ENCODE measurements at regions of chr19 and their contacts with region 1.

Region 1: DNA sequence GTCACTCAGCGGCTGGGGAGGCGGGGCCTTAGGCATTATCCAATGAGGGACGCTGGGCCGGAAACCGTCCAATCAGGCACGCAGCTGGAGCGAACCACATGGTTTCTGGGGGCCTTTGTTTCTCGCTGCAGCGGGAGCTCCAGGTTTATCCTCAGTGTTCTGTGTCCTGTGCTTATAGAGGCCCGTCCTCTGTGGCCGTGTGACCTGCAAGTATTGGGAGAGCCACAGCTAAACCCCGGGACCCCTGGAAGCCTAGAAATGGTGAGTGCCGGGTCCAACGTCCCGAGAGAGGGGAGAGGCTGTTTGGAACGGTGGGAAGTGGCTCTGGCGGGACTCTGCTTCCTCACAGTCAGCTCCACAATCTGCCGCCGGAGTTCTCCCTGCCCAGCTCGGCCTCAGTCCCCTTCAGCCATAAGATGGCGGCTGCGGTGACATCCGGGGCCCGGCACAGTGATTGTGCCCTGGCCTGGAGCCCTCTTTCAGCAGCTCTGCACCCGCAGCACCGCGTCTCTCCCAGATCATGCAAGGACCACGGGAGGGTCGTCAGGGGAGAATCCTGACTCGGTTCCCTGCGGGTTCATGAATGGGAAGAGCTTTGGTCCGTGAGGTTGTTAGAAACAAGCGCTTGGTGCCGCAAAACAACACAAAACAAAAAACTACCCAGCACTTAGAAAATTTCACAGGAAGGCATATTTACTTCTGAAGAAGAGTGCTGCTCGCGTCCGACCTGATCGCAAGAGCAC is at the start of gene ZNF253:
- DNase-seq: peak; percentile 95 to 99 (median 98)

Region 2: DNA sequence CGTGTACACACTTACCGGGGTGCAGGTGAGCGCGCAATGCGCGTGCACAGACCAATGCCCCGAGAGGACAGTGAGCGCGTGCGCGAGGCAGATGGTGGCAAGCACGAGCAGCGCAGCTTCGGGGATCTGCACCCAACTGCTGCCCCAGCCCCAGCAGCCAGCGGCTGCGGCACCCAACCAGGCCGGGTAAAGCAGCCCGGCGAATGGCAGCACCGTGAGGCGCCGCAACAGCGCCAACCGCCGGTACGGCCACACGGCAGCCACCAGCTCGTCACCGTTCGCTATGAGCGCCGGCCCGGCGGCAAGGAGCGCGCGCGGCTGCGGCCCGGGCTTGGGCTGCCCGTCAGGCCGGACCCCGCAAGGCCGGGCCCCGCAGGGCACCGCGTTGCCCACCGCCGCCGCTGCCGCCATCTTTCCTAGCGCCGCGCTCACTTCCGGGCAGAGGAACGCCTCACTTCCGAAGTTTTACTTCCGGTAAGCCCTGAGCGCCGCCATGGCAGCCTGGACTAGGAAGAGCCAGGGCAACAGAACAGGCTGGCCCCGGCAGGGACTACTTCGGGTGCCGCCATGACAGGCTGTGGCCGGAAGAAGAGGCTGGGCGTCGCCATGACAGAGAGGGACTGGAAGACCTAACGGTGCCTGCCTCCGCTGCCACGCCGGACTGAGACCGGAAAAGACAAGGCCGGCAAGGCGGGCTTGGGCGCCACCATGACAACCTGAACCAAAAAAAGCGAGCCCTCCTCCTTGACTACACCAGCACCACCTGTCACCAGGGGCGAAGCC is 202.5 kb before region 1 on chr19 and contains the start of gene ATP13A1:
- intact Hi-C with region 1: loop called (anchors 10 kb)
- DNase-seq: peak; percentile 93 to 99 (median 96)

Region 3: DNA sequence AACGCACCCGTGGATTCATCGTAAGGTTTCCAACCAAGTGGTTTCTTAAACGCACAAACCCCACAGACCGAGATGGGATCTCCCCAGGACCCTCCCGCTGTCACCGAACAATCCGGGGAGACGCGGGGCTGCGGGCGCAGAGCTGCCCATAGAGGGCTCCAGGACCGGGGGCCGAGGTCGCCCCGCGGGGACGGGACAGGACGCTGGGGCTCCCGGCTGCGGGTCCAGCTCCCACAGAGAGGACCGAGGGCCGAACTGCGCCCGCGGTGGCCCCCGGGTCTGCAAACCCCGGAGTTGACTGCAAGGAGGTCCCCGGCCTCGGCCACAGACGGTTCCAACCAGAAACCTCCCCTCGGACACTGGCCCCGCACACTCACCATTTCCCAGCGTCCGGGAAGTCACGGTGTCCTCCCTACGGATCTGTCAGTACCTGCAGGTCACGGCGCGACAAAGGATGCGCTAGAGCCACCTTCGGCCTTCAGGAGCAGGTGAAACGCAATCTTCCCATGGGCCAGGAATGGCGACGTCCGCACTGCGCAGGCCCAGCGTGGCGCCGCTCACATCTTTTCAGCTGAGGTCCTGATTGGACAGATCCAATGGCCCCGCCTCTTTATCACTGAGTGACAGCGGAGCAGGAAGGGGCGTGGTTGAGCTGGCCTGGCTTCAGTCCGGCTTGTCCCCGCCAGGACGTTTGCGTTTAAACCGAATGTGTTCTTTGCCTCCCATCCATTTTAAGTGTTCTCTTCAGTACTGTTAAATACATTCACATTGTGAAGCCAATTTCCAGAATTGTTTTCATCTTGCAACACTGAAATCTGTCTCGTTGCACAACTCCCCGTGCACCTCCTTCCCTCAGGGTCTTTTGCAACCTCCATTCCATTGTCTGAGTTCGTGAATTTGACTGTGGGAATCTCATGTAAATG is 133.1 kb before region 1 on chr19 and contains the start of gene ZNF14:
- intact Hi-C with region 1: loop called (anchors 5 kb)
- DNase-seq: peak; percentile 87 to 99 (median 92)

Region 4: DNA sequence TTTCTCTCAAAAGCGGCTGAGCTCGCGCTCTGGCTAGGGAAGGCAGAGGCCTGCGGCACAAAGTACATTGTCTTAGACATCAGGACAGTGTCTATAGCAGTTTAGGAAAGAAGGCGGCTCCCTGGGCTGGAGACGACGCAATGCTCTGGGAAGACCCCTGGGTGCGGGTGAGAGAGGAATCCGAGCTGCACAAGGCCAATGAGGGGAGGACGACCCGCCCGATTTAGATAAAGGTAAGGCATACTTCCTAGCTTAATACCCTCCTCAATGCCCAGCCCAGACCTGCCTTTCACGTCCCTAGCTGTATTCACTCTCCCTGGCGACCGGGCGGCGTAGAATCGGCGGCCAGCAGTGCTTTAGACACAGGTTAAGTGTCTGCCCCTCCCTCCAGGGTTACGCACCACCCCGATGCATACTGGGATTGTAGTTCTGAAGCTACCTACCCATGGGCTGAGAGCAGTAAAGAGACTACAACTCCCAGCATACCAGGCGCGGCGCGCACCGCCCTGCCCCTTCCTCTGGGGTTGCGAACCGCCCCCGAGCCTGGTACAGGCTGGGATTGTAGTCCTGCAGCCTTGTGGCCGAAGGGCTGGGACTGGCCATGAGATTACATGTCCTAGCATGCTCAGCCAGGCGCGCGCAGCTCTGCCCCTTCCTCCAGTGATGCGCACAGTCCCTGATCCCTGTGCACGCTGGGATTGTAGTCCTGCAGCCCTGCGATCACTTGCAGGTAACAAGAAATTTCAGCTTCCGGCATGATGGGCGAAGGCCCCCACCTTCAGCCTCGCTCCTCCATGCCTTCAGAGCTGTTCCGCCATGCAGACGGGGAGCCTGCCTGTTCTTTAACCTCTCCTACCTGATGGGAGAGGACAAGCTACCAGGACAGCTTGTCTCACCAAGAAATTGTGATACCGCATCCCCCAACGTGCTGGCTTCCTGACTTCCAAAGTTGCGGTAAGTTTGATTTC is 89.6 kb before region 1 on chr19:
- intact Hi-C with region 1: loop called (anchors 5 kb)
- DNase-seq: peak; percentile 98 to 100 (median 100)

Region 5: DNA sequence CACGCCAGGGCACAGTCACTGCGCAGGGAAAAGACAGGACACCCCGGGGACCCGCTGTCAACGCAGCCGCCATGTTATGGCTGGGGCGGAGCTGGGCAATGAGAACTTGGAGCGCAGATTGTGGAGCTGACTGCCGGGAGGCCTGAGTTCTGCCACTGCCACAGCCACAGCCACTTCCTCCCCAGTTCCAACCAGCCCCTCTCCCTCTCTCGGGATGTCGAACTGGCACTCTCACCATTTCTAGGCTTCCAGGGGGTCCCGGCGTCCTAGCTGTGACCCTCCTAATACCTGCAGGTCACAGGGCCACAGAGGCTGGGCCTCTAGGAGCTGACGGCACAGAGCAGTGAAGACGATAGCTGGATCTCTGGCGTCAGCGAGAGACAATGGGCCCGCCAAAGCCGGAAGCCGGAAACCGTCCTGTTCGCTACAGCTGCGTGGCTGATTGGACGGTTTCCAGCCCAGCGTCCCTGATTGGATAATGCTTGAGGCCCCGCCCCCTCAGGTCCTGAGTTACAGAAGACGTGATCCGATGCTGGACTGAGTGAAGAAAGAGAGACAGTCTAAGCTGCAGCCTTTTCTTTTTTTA is 44.5 kb before region 1 on chr19 and contains the start of gene ZNF506:
- intact Hi-C with region 1: loop called (anchors 5 kb)
- DNase-seq: peak; percentile 94 to 99 (median 98)

Region 6: DNA sequence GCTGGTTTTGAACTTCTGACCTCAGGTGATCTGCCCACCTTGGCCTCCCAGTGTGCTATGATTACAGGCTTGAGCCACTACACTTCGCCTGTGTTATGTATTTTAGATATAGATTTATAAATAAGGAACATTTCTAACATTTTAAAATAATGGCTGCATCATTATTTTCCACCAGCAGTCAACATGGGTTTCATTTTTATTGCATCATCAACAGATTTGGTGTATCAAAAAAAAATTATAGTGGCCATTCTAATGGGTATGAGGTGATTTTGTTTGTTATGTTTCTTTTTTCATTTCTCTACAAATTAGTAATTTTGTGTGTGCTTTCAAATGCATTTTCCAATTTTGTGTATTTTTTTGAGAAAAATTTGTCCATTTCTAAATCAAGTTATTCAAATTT is 18.7 kb after region 1 on chr19:
- intact Hi-C with region 1: no loop called
- DNase-seq: no peak

Region 7: DNA sequence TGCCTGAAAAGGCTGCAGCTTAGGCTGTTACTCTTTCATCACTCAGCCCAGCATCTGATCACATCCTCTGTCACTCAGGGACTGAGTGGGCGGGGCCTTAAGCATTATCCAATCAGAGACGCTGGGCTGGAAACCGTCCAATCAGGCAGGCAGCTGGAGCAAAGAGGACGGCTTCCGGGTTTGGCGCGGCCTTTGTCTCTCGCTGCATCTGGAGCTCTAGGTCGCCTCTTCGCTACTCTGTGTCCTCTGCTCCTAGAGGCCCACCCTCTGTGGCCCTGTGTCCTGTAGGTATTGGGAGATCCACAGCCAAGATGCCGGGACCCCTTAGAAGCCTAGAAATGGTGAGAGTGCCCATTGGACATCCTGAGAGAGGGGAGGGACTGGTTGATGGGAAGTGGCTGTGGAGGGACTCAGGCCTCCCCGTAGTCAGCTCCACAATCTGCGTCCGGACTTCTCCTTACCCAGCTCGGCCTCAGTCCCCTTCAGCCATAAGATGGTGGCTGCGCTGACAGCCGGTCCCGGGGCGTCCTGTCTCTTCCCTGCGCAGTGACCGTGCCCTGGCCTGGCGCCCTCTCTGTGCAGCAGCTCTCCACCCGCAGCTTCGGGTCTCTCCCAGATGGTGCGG is 301.2 kb after region 1 on chr19 and contains the start of gene ZNF486:
- intact Hi-C with region 1: no loop called
- DNase-seq: peak; percentile 86 to 99 (median 96)

Region 8: DNA sequence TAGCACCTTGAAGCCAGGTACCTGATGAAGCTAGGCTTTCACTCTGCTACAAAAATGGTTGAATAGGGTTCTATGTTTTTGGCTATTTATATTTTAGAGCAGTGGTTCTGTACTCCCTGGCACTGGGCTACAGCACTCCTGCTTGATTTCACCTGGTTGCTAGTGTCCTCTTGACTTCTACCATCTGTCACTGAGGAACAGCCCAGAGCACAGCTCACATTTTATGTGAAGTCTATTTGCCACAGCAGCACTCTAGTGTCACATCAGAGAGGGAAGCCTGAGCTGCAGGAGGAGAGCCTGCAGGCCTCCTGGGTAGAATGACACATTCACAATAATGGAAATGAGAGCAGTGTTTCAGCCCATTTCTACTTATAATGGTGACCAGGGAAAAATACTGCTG is 485.3 kb after region 1 on chr19:
- intact Hi-C with region 1: no loop called
- DNase-seq: no peak

Measured in posterior cingulate gyrus (tissue), 11 donors.